CD8-positive, alpha-beta T cell (primary cell): ENCODE measurements at regions of chr12 and their contacts with region 1.

Region 1: DNA sequence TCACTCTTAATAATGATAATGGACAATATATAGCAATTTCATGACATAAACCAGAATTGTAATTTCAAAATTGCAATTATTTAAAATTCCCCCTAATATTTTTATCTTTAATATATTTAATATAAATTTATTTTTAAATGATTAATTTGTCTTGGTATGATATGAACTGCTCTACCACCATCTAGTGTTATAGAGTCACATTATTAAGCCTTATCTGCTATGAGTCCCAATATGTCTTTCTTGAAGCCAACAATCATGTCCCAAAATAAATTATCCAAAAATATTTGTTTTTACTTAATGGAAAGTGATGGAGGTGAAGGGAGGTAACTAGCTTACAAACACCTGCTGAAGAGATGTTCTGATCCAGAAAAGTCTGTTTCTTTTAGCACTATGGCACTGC is 151.4 kb downstream of the KCNC2 start:
- DNase-seq: peak in 1 of 9 experiments; percentile 8
- ATAC-seq: no peak
- H3K4me3 ChIP-seq: no peak overlapping the region
- H3K4me3 Mint-ChIP-seq: no peak overlapping the region
- H3K27ac ChIP-seq: no peak overlapping the region
- H3K27ac Mint-ChIP-seq: no peak overlapping the region
- H3K4me1 ChIP-seq: no peaks in the 10 kb centered on the region
- H3K4me1 Mint-ChIP-seq: no peaks in the 10 kb centered on the region
- H3K27me3 ChIP-seq: no peaks in the 10 kb centered on the region
- H3K27me3 Mint-ChIP-seq: no peaks in the 10 kb centered on the region
- CTCF ChIP-seq: no peak

Region 2: GRCh38 chr12:74152370-74152769 is 905.9 kb before region 1 on chr12:
- CTCF ChIA-PET with region 1: no interaction called
- POLR2A ChIA-PET with region 1: no interaction called
- intact Hi-C with region 1: no loop called
- DNase-seq: no peak
- ATAC-seq: no peak
- H3K4me3 ChIP-seq: no peak overlapping the region
- H3K4me3 Mint-ChIP-seq: no peak overlapping the region
- H3K27ac ChIP-seq: no peak overlapping the region
- H3K27ac Mint-ChIP-seq: no peak overlapping the region
- H3K4me1 ChIP-seq: no peaks in the 10 kb centered on the region
- H3K4me1 Mint-ChIP-seq: no peaks in the 10 kb centered on the region
- H3K27me3 ChIP-seq: no peaks in the 10 kb centered on the region
- H3K27me3 Mint-ChIP-seq: no peaks in the 10 kb centered on the region
- CTCF ChIP-seq: no peak

Region 3: GRCh38 chr12:74646831-74647230 is 411.4 kb before region 1 on chr12:
- CTCF ChIA-PET with region 1: no interaction called
- POLR2A ChIA-PET with region 1: no interaction called
- intact Hi-C with region 1: no loop called
- DNase-seq: no peak
- ATAC-seq: no peak
- H3K4me3 ChIP-seq: no peak overlapping the region
- H3K4me3 Mint-ChIP-seq: no peak overlapping the region
- H3K27ac ChIP-seq: no peak overlapping the region
- H3K27ac Mint-ChIP-seq: no peak overlapping the region
- H3K4me1 ChIP-seq: no peaks in the 10 kb centered on the region
- H3K4me1 Mint-ChIP-seq: no peaks in the 10 kb centered on the region
- H3K27me3 ChIP-seq: no peaks in the 10 kb centered on the region
- H3K27me3 Mint-ChIP-seq: peaks cover 3% of the 10 kb centered on the region
- CTCF ChIP-seq: no peak

Region 4: DNA sequence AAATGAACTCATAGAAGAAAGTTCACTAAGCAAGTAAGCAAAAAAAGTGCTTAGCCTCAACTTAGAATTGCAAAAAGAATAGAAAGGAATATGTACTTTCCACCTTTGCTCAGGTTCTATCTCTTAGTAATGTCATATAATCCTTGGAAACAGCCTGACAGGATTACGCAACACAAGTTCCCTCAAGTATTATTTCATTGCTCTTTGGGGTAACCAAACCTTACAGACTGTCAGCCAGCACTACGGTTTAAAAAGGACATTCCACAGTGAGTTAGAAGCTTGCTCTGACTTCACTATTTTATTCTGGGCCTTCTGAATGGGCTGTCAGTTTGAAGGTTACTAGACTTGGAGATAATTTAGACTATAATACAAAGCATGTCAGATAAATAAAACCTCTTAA is 256.6 kb before region 1 on chr12:
- CTCF ChIA-PET with region 1: no interaction called
- POLR2A ChIA-PET with region 1: no interaction called
- intact Hi-C with region 1: loop called in 1 of 2 experiments (anchors 10 kb)
- DNase-seq: no peak
- ATAC-seq: no peak
- H3K4me3 ChIP-seq: no peak overlapping the region
- H3K4me3 Mint-ChIP-seq: no peak overlapping the region
- H3K27ac ChIP-seq: no peak overlapping the region
- H3K27ac Mint-ChIP-seq: no peak overlapping the region
- H3K4me1 ChIP-seq: no peaks in the 10 kb centered on the region
- H3K4me1 Mint-ChIP-seq: no peaks in the 10 kb centered on the region
- H3K27me3 ChIP-seq: no peaks in the 10 kb centered on the region
- H3K27me3 Mint-ChIP-seq: no peaks in the 10 kb centered on the region
- CTCF ChIP-seq: no peak

Region 5: GRCh38 chr12:74849801-74850200 is 208.4 kb before region 1 on chr12:
- CTCF ChIA-PET with region 1: no interaction called
- POLR2A ChIA-PET with region 1: no interaction called
- intact Hi-C with region 1: loop called in 1 of 2 experiments (anchors 10 kb)
- DNase-seq: peak in 1 of 9 experiments; percentile 2
- ATAC-seq: no peak
- H3K4me3 ChIP-seq: no peak overlapping the region
- H3K4me3 Mint-ChIP-seq: no peak overlapping the region
- H3K27ac ChIP-seq: no peak overlapping the region
- H3K27ac Mint-ChIP-seq: no peak overlapping the region
- H3K4me1 ChIP-seq: no peaks in the 10 kb centered on the region
- H3K4me1 Mint-ChIP-seq: no peaks in the 10 kb centered on the region
- H3K27me3 ChIP-seq: no peaks in the 10 kb centered on the region
- H3K27me3 Mint-ChIP-seq: no peaks in the 10 kb centered on the region
- CTCF ChIP-seq: no peak

Region 6: GRCh38 chr12:75170528-75171182 is 112.4 kb after region 1 on chr12:
- CTCF ChIA-PET with region 1: no interaction called
- POLR2A ChIA-PET with region 1: no interaction called
- intact Hi-C with region 1: no loop called
- DNase-seq: no peak
- ATAC-seq: no peak
- H3K4me3 ChIP-seq: no peak overlapping the region
- H3K4me3 Mint-ChIP-seq: no peak overlapping the region
- H3K27ac ChIP-seq: no peak overlapping the region
- H3K27ac Mint-ChIP-seq: no peak overlapping the region
- H3K4me1 ChIP-seq: no peaks in the 10 kb centered on the region
- H3K4me1 Mint-ChIP-seq: no peaks in the 10 kb centered on the region
- H3K27me3 ChIP-seq: no peaks in the 10 kb centered on the region
- H3K27me3 Mint-ChIP-seq: no peaks in the 10 kb centered on the region
- CTCF ChIP-seq: no peak